Caco-2 (cell line): ENCODE measurements at regions of chr1 and their contacts with region 1.

Region 1: GRCh38 chr1:94698759-94699502 is 121.2 kb upstream of the SLC44A3 start:
- DNase-seq: no peak
- H3K4me3 ChIP-seq: no peak overlapping the region
- H3K4me3 Mint-ChIP-seq: no peak overlapping the region
- H3K27ac Mint-ChIP-seq: peak overlapping the region; percentile 67
- H3K4me1 ChIP-seq: peaks cover 24% of the 10 kb centered on the region
- H3K4me1 Mint-ChIP-seq: peaks cover 22% of the 10 kb centered on the region
- H3K27me3 ChIP-seq: no peaks in the 10 kb centered on the region
- H3K27me3 Mint-ChIP-seq: no peaks in the 10 kb centered on the region
- CTCF ChIP-seq: no peak

Region 2: GRCh38 chr1:94608142-94608851 is 90.6 kb before region 1 on chr1:
- CTCF ChIA-PET with region 1: interaction called, 5 read pairs
- POLR2A ChIA-PET with region 1: no interaction called
- intact Hi-C with region 1: loop called (anchors 5 kb)
- DNase-seq: peak; percentile 69 to 75
- H3K4me3 ChIP-seq: no peak overlapping the region
- H3K4me3 Mint-ChIP-seq: peak overlapping the region; percentile 64
- H3K27ac Mint-ChIP-seq: peak overlapping the region; percentile 98
- H3K4me1 ChIP-seq: peaks cover 71% of the 10 kb centered on the region
- H3K4me1 Mint-ChIP-seq: peaks cover 65% of the 10 kb centered on the region
- H3K27me3 ChIP-seq: no peaks in the 10 kb centered on the region
- H3K27me3 Mint-ChIP-seq: no peaks in the 10 kb centered on the region
- CTCF ChIP-seq: peak in 1 of 2 experiments; percentile 0

Region 3: GRCh38 chr1:94660994-94661393 is 37.9 kb before region 1 on chr1:
- CTCF ChIA-PET with region 1: no interaction called
- POLR2A ChIA-PET with region 1: no interaction called
- intact Hi-C with region 1: loop called (anchors 5 kb)
- DNase-seq: peak; percentile 21 to 42
- H3K4me3 ChIP-seq: no peak overlapping the region
- H3K4me3 Mint-ChIP-seq: no peak overlapping the region
- H3K27ac Mint-ChIP-seq: no peak overlapping the region
- H3K4me1 ChIP-seq: peaks cover 39% of the 10 kb centered on the region
- H3K4me1 Mint-ChIP-seq: no peaks in the 10 kb centered on the region
- H3K27me3 ChIP-seq: no peaks in the 10 kb centered on the region
- H3K27me3 Mint-ChIP-seq: no peaks in the 10 kb centered on the region
- CTCF ChIP-seq: no peak

Region 4: GRCh38 chr1:94719926-94720793 is 21.2 kb after region 1 on chr1:
- CTCF ChIA-PET with region 1: no interaction called
- POLR2A ChIA-PET with region 1: no interaction called
- intact Hi-C with region 1: no loop called
- DNase-seq: no peak
- H3K4me3 ChIP-seq: no peak overlapping the region
- H3K4me3 Mint-ChIP-seq: no peak overlapping the region
- H3K27ac Mint-ChIP-seq: no peak overlapping the region
- H3K4me1 ChIP-seq: no peaks in the 10 kb centered on the region
- H3K4me1 Mint-ChIP-seq: no peaks in the 10 kb centered on the region
- H3K27me3 ChIP-seq: no peaks in the 10 kb centered on the region
- H3K27me3 Mint-ChIP-seq: no peaks in the 10 kb centered on the region
- CTCF ChIP-seq: no peak